Activated naive CD4-positive, alpha-beta T cell treated with anti-CD3 and anti-CD28 coated beads for 36 hours (primary cell): ENCODE measurements at regions of chr14 and their contacts with region 1.

Region 1: DNA sequence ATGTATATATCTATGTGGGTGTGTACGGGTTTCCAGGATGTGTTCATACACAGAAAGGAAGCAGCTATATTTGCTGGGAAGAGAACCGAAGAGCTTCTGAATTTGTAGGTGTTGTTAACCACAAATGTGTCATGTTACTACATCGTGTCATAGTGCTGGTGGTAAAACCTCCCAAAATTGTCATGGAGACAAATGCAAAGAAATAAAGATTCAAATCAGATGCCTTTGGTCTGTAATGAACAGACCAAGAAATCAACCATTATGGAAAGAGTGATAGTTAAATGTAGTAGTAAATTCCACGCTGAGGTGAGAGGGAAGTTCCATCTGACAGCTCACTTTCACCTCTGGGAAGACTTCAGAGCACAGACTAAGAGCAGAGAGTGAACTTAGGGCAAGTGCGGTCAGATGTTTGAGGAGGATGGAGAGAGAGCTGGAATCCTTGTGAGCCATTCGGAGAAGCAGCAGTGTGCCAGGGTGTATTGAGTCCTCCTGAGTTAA is 487.5 kb downstream of the TMEM121 start:
- DNase-seq: peak; percentile 66
- H3K4me3 Mint-ChIP-seq: peak overlapping the region; percentile 75
- H3K27ac Mint-ChIP-seq: peak overlapping the region; percentile 100
- H3K4me1 Mint-ChIP-seq: peaks cover 81% of the 10 kb centered on the region
- H3K27me3 Mint-ChIP-seq: no peaks in the 10 kb centered on the region

Region 2: DNA sequence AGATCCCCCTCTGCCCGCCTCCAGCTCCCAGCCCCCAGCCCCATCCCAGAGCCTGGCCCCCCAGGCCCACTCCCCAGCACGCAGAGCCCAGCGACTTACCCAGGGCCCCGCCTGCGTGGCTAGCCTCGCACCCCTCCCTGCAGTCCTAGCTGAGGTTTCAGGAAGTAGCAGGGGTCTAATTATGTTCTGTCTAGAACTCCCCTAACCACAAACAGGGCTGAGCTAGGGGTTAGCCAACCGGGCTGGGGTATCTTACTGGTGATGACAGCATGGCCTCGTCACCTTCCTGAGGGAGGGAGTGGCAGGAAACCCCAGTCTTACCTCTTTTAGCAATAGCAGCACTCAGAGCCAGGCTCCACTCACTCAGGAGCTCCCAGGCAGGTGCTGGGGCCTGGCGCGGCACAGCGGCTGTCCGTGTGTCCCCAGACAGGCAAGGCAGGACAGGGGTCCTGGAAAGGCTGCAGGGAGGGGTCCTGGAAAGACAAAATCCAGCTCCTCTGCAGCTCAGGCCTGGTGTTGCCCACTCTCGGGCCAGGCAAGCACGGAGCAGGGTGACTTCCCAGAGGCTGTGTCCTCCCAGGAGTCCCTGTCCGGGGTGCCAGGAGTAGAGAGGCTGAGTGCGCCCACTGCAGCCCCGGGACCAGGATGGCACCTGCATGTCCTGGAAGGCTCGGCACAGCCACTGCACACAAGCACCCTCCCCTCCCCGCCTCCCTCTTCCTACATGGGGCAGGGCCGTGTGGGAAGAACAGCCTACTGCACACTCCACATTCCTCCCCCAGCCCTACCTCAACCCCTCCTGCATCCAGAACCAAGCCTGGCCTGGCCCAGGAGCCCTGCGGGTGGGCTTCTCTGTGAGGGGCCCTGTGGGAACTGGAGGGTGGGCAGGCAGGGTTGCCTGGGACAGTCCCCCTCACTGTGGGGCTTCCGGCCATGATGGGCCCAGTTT is 948.4 kb before region 1 on chr14 and contains the start of gene GPR132:
- CTCF ChIA-PET with region 1: no interaction called
- intact Hi-C with region 1: loop called (anchors 5 kb)
- DNase-seq: peak; percentile 97
- H3K4me3 Mint-ChIP-seq: peak within 1 kb of the TSS; percentile 84
- H3K27ac Mint-ChIP-seq: peak within 1 kb of the TSS; percentile 96
- H3K4me1 Mint-ChIP-seq: peaks cover 81% of the 10 kb centered on the region
- H3K27me3 Mint-ChIP-seq: no peaks in the 10 kb centered on the region
- total RNA-seq, gene GPR132: 11.3 to 15.3 TPM

Region 3: DNA sequence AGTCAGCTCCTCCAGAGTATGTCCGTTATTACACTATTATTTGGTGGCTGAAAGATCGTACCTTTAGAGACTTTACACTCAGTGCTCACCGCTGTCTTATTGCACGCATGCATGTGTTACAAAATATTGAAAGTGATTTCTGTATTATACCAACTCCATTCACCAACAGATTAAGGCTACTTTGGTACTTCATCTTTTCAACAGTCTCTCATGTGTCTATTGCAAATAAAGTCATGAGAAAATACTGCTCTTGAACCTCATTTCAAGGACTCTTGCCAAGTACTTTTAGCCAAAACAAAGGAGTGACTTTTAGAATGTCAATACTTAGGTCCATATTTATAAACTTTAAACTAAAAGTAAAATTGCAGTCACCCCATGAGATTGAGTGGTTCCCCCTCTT is 16.0 kb after region 1 on chr14:
- CTCF ChIA-PET with region 1: interaction called, 7 read pairs
- intact Hi-C with region 1: loop called (anchors 1 kb)
- DNase-seq: no peak
- H3K4me3 Mint-ChIP-seq: no peak overlapping the region
- H3K27ac Mint-ChIP-seq: no peak overlapping the region
- H3K4me1 Mint-ChIP-seq: peaks cover 37% of the 10 kb centered on the region
- H3K27me3 Mint-ChIP-seq: no peaks in the 10 kb centered on the region

Region 4: GRCh38 chr14:106044949-106045600 is 31.1 kb after region 1 on chr14:
- CTCF ChIA-PET with region 1: interaction called, 12 read pairs
- intact Hi-C with region 1: loop called (anchors 1 kb)
- DNase-seq: peak; percentile 96
- H3K4me3 Mint-ChIP-seq: no peak overlapping the region
- H3K27ac Mint-ChIP-seq: peak overlapping the region; percentile 81
- H3K4me1 Mint-ChIP-seq: peaks cover 14% of the 10 kb centered on the region
- H3K27me3 Mint-ChIP-seq: peaks cover 5% of the 10 kb centered on the region

Region 5: DNA sequence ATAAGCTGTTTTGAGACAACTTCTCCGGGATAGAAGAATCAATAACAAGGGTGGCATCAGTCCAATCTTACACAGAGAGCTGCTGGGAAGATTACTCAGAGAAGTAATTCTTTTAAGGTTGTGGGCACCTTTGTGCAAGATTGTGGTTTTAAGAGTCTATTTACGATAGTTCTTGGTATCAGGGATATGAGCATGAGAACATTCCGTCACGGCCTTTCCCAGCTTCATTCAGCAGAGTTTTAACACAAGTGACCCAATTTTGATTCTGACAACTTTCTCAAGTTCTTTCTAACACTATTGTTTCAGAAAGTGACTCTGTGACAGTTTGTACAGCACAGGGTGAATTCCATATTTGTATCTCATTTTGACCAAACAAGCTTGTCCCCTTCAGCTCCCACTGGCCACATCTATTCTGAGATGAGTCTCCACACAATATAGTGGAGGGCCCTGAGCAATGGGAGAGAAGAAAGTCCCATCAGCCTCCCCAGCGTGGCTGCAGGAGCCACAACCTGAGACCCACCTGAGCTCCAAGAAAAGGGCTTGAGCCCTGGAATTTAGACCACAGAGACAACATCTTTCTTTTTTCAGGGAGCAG is 381.6 kb after region 1 on chr14:
- CTCF ChIA-PET with region 1: no interaction called
- intact Hi-C with region 1: loop called (anchors 5 kb)
- DNase-seq: peak; percentile 74
- H3K4me3 Mint-ChIP-seq: peak overlapping the region; percentile 63
- H3K27ac Mint-ChIP-seq: peak overlapping the region; percentile 92
- H3K4me1 Mint-ChIP-seq: peaks cover 39% of the 10 kb centered on the region
- H3K27me3 Mint-ChIP-seq: peaks cover 8% of the 10 kb centered on the region